MCF 10A (cell line): ENCODE measurements at regions of chr7 and their contacts with region 1.

Region 1: GRCh38 chr7:4479367-4480039 is 202.6 kb upstream of the FOXK1 start:
- DNase-seq: peak; percentile 72
- H3K4me3 Mint-ChIP-seq: no peak overlapping the region
- H3K27ac Mint-ChIP-seq: no peak overlapping the region
- H3K4me1 Mint-ChIP-seq: no peaks in the 10 kb centered on the region
- H3K27me3 Mint-ChIP-seq: peaks cover 16% of the 10 kb centered on the region
- CTCF ChIP-seq: peak; percentile 60

Region 2: GRCh38 chr7:3309140-3309539 is 1170.4 kb before region 1 on chr7:
- CTCF ChIA-PET with region 1: no interaction called
- POLR2A ChIA-PET with region 1: no interaction called
- intact Hi-C with region 1: loop called (anchors 5 kb)
- DNase-seq: peak; percentile 55
- H3K4me3 Mint-ChIP-seq: no peak overlapping the region
- H3K27ac Mint-ChIP-seq: no peak overlapping the region
- H3K4me1 Mint-ChIP-seq: no peaks in the 10 kb centered on the region
- H3K27me3 Mint-ChIP-seq: no peaks in the 10 kb centered on the region
- CTCF ChIP-seq: peak; percentile 20

Region 3: DNA sequence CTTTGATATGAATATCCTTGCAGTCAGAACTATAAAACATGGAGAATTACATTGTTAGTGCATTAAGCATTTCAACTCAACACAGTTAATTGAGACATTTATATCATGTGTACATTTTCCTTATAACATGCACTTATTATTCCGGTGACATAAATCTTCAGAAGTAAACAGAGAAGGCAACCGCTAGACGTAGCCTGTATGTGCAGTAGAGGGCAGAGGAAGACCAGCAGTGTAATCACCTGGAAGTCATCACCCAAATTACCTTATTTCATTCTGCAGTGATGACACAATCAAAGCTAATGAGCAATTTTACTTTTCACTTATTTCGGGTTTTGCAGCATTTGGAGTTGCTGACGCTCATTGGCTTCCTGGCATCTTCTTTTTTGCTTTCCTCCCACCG is 783.9 kb before region 1 on chr7:
- CTCF ChIA-PET with region 1: interaction called, 3 read pairs
- POLR2A ChIA-PET with region 1: no interaction called
- intact Hi-C with region 1: loop called (anchors 1 kb)
- DNase-seq: peak; percentile 35
- H3K4me3 Mint-ChIP-seq: no peak overlapping the region
- H3K27ac Mint-ChIP-seq: no peak overlapping the region
- H3K4me1 Mint-ChIP-seq: no peaks in the 10 kb centered on the region
- H3K27me3 Mint-ChIP-seq: no peaks in the 10 kb centered on the region
- CTCF ChIP-seq: peak; percentile 22

Region 4: DNA sequence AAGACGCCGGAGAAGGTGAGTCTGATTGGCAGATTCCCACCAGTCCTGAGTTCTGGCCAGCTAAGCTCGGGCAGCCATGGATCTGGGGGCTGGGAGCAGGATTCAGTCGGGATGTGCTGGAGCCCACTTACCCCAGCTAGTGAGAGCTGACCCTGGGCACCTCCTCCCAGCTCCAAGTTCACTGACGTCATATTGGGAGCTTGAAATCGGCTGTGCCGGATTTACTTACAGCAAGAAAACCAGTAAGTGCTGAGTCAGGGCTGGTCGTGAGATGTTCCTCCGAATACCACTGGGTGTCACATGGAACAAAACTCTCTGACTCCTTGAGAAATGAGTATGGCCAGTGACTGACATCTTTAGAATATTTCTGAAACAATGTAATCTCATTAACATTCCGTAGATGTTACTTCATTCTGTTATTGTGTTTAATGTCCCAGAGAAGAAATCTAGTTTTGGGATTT is 557.3 kb before region 1 on chr7:
- CTCF ChIA-PET with region 1: interaction called, 19 read pairs
- POLR2A ChIA-PET with region 1: no interaction called
- intact Hi-C with region 1: loop called (anchors 1 kb)
- DNase-seq: peak; percentile 85
- H3K4me3 Mint-ChIP-seq: no peak overlapping the region
- H3K27ac Mint-ChIP-seq: no peak overlapping the region
- H3K4me1 Mint-ChIP-seq: peaks cover 8% of the 10 kb centered on the region
- H3K27me3 Mint-ChIP-seq: peaks cover 10% of the 10 kb centered on the region
- CTCF ChIP-seq: peak; percentile 57

Region 5: GRCh38 chr7:4103352-4104091 is 376.0 kb before region 1 on chr7:
- CTCF ChIA-PET with region 1: interaction called, 6 read pairs
- POLR2A ChIA-PET with region 1: no interaction called
- intact Hi-C with region 1: loop called (anchors 5 kb)
- DNase-seq: peak; percentile 75
- H3K4me3 Mint-ChIP-seq: no peak overlapping the region
- H3K27ac Mint-ChIP-seq: no peak overlapping the region
- H3K4me1 Mint-ChIP-seq: peaks cover 5% of the 10 kb centered on the region
- H3K27me3 Mint-ChIP-seq: no peaks in the 10 kb centered on the region
- CTCF ChIP-seq: no peak